Motor neuron (in vitro differentiated cells): ENCODE measurements at regions of chr10 and their contacts with region 1.

Region 1: GRCh38 chr10:60434418-60435046 is 44.9 kb upstream of the ANK3 start:
- ATAC-seq: peak in 5 of 8 experiments; percentile 45 to 81 (median 65)
- H3K4me3 ChIP-seq: no peak overlapping the region
- H3K27ac ChIP-seq: no peak overlapping the region
- H3K4me1 ChIP-seq: no peaks in the 10 kb centered on the region

Region 2: DNA sequence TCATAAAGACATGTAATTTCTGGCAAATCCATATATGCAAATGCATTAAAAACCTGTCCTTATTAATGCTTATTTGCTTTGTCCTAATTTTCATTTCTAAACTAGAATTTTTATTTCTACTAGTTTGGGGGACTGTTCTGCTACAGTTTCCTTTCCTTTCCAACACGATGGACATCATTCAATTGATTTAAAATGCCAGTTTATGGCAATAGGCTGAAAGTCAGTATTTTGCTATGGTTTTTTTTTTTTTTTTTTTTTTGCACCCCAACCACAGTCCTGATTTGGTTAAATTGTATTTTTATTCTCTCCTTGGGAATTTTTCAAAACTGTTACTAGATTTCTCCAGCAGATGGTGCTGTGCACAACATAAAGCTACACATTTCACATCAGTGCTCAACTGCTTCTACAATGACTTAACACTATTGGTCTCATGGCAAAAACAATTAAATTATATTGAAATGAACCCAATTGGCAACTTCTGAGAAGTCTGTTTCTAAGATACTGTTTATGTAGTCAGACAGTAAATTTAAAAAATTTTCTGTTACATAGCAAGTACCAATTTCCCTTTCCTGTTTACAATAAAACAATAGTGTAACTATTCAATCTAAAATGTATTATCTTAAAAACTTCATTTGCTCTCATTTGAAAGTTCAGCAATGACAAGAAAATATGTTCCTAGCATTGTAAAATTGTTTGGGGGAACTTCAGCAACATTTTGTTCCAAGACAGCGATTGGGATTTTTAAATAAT is 334.4 kb before region 1 on chr10:
- in situ Hi-C with region 1: loop called in 7 of 9 experiments (anchors 25 kb)
- ATAC-seq: peak in 4 of 8 experiments; percentile 48 to 81 (median 78)
- H3K4me3 ChIP-seq: no peak overlapping the region
- H3K27ac ChIP-seq: no peak overlapping the region
- H3K4me1 ChIP-seq: peaks cover 0 to 6% of the 10 kb centered on the region in 2 donors

Region 3: GRCh38 chr10:60114765-60115586 is 319.6 kb before region 1 on chr10:
- in situ Hi-C with region 1: loop called in 3 of 9 experiments (anchors 25 kb)
- ATAC-seq: peak in 3 of 8 experiments; percentile 62 to 91 (median 86)
- H3K4me3 ChIP-seq: no peak overlapping the region
- H3K27ac ChIP-seq: no peak overlapping the region
- H3K4me1 ChIP-seq: no peaks in the 10 kb centered on the region

Region 4: GRCh38 chr10:60208676-60209269 is 225.8 kb before region 1 on chr10:
- in situ Hi-C with region 1: loop called in 3 of 9 experiments (anchors 10 to 25 kb)
- ATAC-seq: peak in 4 of 8 experiments; percentile 20 to 44 (median 32)
- H3K4me3 ChIP-seq: no peak overlapping the region
- H3K27ac ChIP-seq: no peak overlapping the region
- H3K4me1 ChIP-seq: no peaks in the 10 kb centered on the region

Region 5: DNA sequence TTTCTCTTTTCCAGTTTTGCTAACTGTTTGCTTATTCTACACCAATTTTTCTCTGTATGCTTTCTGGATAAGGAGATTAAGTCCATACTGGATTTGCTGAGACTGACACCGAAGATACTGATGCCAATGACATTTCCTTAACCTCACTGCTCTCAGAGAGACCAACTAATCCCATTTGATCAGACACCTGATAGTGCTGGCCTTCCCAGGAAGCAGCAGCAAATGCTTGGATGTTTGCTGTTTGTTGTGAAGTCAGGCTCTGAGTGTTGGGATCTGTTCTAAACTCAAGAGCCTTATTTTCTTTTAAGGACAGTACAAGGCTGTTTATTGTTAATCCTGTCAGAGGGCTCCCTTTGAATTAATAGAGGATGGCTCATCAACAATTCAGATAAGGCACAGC is 188.2 kb before region 1 on chr10:
- in situ Hi-C with region 1: loop called in 1 of 9 experiments (anchors 10 kb)
- ATAC-seq: no peak
- H3K4me3 ChIP-seq: no peak overlapping the region
- H3K27ac ChIP-seq: no peak overlapping the region
- H3K4me1 ChIP-seq: no peaks in the 10 kb centered on the region

Region 6: DNA sequence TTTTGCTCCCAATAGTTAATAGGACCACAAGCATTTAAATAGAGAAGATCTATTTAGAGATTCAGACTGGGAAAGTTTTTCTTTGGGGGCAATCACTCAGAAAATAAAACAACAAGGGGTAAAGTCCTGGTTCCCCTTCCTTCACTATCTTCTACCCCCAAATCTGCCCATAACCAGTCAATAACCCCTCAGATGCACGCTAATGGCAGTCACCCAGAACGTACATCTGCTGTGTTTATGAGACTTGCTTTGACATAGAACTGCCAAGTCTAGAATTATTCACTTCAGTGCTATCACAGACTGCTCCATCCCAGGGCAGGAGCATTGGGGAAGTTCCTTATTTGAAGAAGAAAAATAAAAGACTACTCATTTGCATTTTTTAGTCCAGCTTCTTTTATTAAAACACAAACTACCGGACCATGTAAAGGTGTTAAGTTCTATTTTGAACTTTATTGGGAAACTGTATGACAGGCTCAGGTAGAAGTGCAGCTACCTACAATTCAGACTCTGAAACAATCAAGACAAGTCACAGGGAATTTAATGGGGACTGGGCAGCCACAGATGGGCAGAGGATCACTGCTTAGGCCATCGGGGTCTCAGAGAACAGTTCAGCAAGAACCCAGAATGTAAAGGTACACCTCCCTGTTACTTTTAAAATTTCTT is 83.2 kb before region 1 on chr10:
- in situ Hi-C with region 1: no loop called
- ATAC-seq: peak in 2 of 8 experiments; percentile 7 to 10
- H3K4me3 ChIP-seq: no peak overlapping the region
- H3K27ac ChIP-seq: no peak overlapping the region
- H3K4me1 ChIP-seq: peaks cover 20 to 59% of the 10 kb centered on the region in 2 donors

Region 7: GRCh38 chr10:60646966-60647796 is 212.6 kb after region 1 on chr10:
- in situ Hi-C with region 1: loop called in 1 of 9 experiments (anchors 25 kb)
- ATAC-seq: peak in 6 of 8 experiments; percentile 29 to 53 (median 36)
- H3K4me3 ChIP-seq: no peak overlapping the region
- H3K27ac ChIP-seq: no peak overlapping the region
- H3K4me1 ChIP-seq: peaks cover 0 to 9% of the 10 kb centered on the region in 2 donors

Region 8: GRCh38 chr10:60757420-60757895 is 322.9 kb after region 1 on chr10:
- in situ Hi-C with region 1: loop called in 1 of 9 experiments (anchors 25 kb)
- ATAC-seq: peak in 3 of 8 experiments; percentile 33 to 51 (median 41)
- H3K4me3 ChIP-seq: no peak overlapping the region
- H3K27ac ChIP-seq: no peak overlapping the region
- H3K4me1 ChIP-seq: no peaks in the 10 kb centered on the region